ENCODE measurements at regions of chr10 and their contacts with region 1.

Region 1: DNA sequence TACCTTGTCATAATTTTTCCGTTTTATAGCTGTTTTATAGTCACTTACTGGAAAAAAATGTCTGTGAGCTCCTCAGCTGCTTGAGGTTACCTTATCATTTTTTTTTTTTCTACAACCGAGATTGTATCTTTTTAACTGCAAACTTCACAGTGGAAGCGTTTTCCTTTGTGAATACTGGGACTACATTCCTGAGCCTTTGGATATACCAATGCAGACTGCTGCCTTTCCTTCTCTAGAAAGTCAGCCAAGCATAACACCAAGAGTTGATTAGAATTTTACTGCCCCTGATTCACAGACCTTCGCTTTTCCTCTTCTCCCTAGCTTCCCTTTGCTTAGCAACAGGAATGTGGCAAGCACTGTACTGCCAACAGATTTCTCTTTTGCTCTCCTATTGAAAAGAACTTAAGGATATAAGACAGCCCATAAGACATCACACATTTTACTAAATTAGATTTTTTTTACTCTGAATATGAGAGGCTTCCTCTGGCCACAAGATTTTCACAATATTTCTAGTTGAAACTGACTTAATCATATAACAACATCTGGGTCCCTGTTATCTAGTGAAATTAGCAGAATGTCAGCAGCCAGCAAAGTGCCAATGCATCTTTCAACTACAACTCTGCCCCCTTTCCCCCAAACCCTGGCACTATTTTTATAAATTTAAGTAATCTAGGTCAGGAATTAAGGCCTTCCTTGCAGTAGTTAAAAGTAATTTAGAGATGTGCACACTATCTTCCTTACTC is 170.6 kb downstream of the PRKG1 start:
- DNase-seq: no peak
- ATAC-seq: peak in 3 of 4 donors; percentile 34 to 43 (median 40)
- H3K4me3 ChIP-seq: no peak overlapping the region
- H3K27ac ChIP-seq: peak overlapping the region; percentile 6
- H3K4me1 ChIP-seq: peaks cover 43% of the 10 kb centered on the region
- H3K27me3 ChIP-seq: no peaks in the 10 kb centered on the region
- CTCF ChIP-seq: no peak

Region 2: DNA sequence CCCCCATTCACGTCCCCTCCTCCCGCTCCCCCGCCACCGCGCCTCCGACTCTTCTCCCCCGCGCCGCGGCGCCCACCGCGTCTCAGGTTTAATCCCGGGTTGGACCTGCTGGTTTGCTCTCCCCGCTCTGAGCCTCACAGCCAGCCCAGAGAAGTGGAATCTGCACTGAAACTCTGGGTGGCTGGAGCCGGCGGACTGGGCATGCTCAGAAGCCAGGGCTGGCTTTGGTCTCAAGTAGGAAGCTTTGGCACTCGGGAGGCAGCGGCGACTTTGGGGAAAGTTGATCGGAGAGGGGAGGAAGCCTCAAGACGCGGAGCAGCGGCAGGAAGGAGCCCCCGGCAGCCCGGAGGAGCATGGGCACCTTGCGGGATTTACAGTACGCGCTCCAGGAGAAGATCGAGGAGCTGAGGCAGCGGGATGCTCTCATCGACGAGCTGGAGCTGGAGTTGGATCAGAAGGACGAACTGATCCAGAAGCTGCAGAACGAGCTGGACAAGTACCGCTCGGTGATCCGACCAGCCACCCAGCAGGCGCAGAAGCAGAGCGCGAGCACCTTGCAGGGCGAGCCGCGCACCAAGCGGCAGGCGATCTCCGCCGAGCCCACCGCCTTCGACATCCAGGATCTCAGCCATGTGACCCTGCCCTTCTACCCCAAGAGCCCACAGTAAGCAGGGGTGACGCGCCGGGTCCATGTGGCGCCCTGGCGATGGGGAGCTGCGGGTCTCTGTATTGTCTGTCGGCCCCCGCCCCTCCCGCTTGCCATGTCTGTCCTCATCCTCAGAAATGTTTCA is 170.5 kb before region 1 on chr10 and contains the start of gene PRKG1:
- intact Hi-C with region 1: loop called in 1 of 2 experiments (anchors 10 kb)
- DNase-seq: peak; percentile 76 to 84
- ATAC-seq: peak; percentile 84 to 92 (median 86)
- H3K4me3 ChIP-seq: peak within 1 kb of the TSS; percentile 85
- H3K27ac ChIP-seq: peak within 1 kb of the TSS; percentile 64
- H3K4me1 ChIP-seq: peaks cover 19% of the 10 kb centered on the region
- H3K27me3 ChIP-seq: peaks cover 0 to 3% (median 0%) of the 10 kb centered on the region in 3 donors
- CTCF ChIP-seq: no peak
- total RNA-seq, gene PRKG1: 31.7 to 49.0 (median 45.2) TPM

Region 3: GRCh38 chr10:51170518-51171245 is 74.2 kb before region 1 on chr10:
- intact Hi-C with region 1: no loop called
- DNase-seq: no peak
- ATAC-seq: peak in 2 of 4 donors; percentile 54 to 65
- H3K4me3 ChIP-seq: no peak overlapping the region
- H3K27ac ChIP-seq: no peak overlapping the region
- H3K4me1 ChIP-seq: peaks cover 20% of the 10 kb centered on the region
- H3K27me3 ChIP-seq: no peaks in the 10 kb centered on the region
- CTCF ChIP-seq: no peak